ENCODE measurements at regions of chr12 and their contacts with region 1.

Region 1: DNA sequence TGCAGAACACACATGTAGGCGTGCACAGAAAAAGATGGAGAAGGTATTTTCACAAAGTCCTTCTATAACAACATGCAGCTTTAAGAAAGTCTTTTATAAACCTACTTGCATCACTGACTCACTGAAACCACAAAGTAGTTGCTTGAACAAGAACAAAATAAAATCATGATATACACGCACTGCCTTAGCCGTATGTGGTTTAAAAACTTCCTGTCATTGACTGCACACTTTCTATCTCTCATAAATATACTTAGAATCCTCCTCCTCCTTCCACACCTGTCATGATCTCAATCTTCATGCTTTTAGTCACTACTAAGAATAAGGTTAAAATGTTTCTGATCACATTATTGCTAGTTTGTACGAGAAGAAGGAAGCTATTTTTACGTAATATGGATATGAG is 31.8 kb upstream of the RAD51AP1 start:
- DNase-seq: peak; percentile 32
- H3K4me3 Mint-ChIP-seq: peak overlapping the region; percentile 1
- H3K27ac Mint-ChIP-seq: peak overlapping the region; percentile 63
- H3K4me1 Mint-ChIP-seq: peaks cover 26% of the 10 kb centered on the region
- H3K27me3 Mint-ChIP-seq: no peaks in the 10 kb centered on the region

Region 2: GRCh38 chr12:4135919-4136605 is 370.8 kb before region 1 on chr12:
- CTCF ChIA-PET with region 1: no interaction called
- intact Hi-C with region 1: loop called (anchors 2 kb)
- DNase-seq: peak; percentile 95
- H3K4me3 Mint-ChIP-seq: peak overlapping the region; percentile 41
- H3K27ac Mint-ChIP-seq: peak overlapping the region; percentile 99
- H3K4me1 Mint-ChIP-seq: peaks cover 75% of the 10 kb centered on the region
- H3K27me3 Mint-ChIP-seq: no peaks in the 10 kb centered on the region

Region 3: DNA sequence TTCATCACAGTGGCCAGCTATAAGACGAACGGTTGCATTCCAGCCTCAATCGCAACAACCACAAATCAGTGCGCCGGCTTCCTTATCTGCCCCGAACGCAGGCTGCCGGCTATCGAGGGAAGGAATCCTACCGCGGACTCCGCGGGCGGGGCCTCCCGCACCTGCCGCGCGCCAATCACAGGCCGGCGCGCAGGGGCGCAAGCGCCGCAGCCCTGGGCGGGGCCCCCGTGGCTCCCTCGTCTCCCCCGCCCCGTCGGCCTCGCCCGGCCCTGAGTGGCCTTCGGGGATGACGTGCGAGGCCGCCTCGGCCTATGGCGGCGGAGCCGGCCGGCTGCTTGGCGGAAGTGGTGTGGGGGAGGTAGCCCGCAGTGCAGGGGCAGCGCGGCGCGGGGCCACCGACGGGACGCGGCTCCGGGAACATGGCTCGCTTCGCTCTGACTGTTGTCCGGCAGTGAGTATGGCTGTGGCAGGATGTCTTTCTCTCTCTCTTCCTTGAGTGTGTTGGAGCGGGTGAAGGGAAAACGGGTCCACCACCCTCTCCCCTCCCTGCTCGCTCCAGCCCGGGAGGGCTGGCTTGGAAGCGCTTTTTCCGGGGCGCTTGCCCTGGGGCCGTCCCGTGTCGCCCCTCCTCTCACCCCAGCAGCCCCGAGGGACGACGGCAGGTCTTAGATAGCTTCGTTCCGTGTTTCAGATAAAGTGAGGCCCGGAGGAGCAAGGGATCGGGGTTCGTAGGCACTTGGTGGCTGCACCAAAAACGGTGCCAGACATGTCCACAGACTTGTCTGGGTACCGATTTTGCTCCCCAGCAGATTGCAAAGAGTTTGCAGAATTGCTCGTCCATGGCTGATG is 185.8 kb before region 1 on chr12 and contains the start of gene TIGAR:
- CTCF ChIA-PET with region 1: no interaction called
- intact Hi-C with region 1: loop called (anchors 2 kb)
- DNase-seq: peak; percentile 91
- H3K4me3 Mint-ChIP-seq: peak within 1 kb of the TSS; percentile 83
- H3K27ac Mint-ChIP-seq: peak within 1 kb of the TSS; percentile 87
- H3K4me1 Mint-ChIP-seq: peaks cover 34% of the 10 kb centered on the region
- H3K27me3 Mint-ChIP-seq: no peaks in the 10 kb centered on the region
- total RNA-seq, gene TIGAR: 10.3 to 12.8 TPM

Region 4: GRCh38 chr12:4496145-4496838 is 10.6 kb before region 1 on chr12:
- CTCF ChIA-PET with region 1: no interaction called
- intact Hi-C with region 1: loop called (anchors 1 kb)
- DNase-seq: no peak
- H3K4me3 Mint-ChIP-seq: no peak overlapping the region
- H3K27ac Mint-ChIP-seq: no peak overlapping the region
- H3K4me1 Mint-ChIP-seq: peaks cover 14% of the 10 kb centered on the region
- H3K27me3 Mint-ChIP-seq: no peaks in the 10 kb centered on the region

Region 5: DNA sequence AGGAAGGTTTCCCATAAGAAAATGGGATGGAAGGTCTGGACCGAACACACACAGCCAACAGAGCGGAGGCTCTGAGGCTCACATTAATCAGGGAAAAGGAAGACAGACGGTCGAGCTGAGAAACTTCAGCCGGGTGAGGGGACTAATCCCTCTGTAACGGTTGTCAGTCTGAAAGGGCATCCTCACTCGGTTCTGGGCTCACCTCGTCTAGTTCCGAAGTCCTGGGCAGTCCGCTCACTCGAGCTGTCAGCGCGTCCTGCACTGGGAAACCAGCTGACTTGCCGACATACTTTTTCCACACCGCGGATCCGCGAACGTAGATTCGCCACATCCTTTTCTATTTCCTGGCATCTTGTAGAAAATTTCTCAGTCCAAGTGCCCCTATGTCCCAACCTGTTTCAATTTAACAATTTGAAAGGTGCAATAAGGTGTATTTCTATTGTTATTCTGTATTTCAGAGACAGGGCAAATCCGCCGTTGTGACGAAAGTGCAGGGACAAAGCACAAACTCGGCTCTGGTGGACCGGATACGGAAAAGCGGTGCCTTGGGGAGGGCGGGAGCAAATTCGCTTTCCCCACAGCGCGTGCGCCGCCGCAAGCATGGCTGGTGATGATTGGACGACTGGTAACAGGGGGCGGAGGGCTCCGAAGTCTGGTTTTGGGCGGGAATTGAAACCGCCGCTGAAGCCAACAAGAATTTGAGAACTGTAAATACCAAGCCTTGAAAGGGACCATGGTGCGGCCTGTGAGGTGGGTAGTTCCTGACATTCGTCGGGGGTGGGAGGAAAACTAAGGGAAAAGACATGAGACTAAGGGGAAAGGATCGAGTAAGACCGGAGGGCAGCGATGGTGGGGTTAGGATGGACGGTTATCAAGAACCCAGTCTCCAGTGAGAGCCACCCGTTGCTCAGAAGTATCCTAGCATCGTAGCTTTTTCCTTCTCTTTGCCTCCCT is 31.6 kb after region 1 on chr12 and contains the start of gene RAD51AP1:
- CTCF ChIA-PET with region 1: no interaction called
- intact Hi-C with region 1: loop called (anchors 1 kb)
- DNase-seq: peak; percentile 97
- H3K4me3 Mint-ChIP-seq: peak within 1 kb of the TSS; percentile 97
- H3K27ac Mint-ChIP-seq: peak within 1 kb of the TSS; percentile 98
- H3K4me1 Mint-ChIP-seq: peaks cover 25% of the 10 kb centered on the region
- H3K27me3 Mint-ChIP-seq: no peaks in the 10 kb centered on the region
- total RNA-seq, gene RAD51AP1: 69.5 to 76.5 TPM

Region 6: GRCh38 chr12:4809013-4809448 is 302.2 kb after region 1 on chr12:
- CTCF ChIA-PET with region 1: no interaction called
- intact Hi-C with region 1: loop called (anchors 2 kb)
- DNase-seq: no peak
- H3K4me3 Mint-ChIP-seq: no peak overlapping the region
- H3K27ac Mint-ChIP-seq: no peak overlapping the region
- H3K4me1 Mint-ChIP-seq: peaks cover 27% of the 10 kb centered on the region
- H3K27me3 Mint-ChIP-seq: peaks cover 31% of the 10 kb centered on the region